ENCODE measurements at regions of chr10 and their contacts with region 1.

Region 1: GRCh38 chr10:13299437-13300287 is at the start of gene PHYH:
- DNase-seq: peak; percentile 94 to 98
- ATAC-seq: peak; percentile 88 to 93 (median 92)
- H3K4me3 ChIP-seq: peak within 1 kb of the TSS; percentile 87
- H3K27ac ChIP-seq: peak within 1 kb of the TSS; percentile 99
- H3K4me1 ChIP-seq: peaks cover 6% of the 10 kb centered on the region
- H3K27me3 ChIP-seq: no peaks in the 10 kb centered on the region
- CTCF ChIP-seq: no peak
- total RNA-seq, gene PHYH: 129 to 210 (median 183) TPM

Region 2: DNA sequence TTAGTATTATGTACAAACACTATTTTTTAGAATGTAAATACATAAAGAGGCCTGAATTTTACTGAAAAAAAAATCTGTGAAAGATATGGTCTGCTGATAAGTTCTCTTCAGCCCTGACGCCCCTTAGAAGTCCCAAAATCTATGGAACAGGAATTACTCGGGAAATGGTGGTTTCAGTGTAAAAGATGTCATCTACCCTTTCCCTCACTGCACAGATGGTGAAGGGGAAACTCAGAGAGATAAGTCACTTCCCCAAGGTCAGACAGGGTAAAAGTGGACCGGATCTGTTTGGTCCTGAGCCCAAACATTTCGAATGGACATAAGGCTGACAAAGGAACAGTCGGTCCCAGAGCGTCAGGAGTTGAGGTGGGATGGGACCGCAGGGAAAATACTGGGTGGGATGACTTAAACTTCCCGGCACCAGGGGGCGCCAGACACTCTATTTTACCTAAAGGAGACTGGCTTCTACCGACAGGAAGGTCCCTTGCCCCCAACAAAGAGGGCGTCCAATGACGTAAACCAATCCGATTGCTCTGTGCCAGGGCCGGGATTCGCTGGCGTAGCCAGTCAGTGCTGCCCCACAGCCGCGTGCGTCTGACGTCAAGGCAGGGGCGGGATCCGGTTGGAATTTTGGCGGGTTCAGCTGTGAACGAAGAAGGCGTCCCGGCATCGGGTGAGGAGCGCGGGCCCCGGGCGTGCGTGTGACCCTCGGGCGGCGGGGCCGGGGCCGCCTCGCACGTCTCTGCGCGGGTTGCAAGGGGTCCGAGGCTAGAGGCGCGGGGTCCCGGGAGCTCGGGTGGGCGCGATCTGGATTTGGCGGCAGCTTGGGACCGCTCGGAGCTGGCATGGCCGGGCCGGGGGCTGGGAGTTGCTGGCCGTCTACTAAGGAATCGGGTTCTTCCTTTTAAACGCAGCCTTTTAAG is 138.5 kb before region 1 on chr10 and contains the start of gene MCM10:
- intact Hi-C with region 1: loop called (anchors 2 kb)
- DNase-seq: peak; percentile 97 to 99
- ATAC-seq: peak; percentile 100
- H3K4me3 ChIP-seq: peak within 1 kb of the TSS; percentile 64
- H3K27ac ChIP-seq: no peak within 1 kb of the TSS
- H3K4me1 ChIP-seq: peaks cover 7% of the 10 kb centered on the region
- H3K27me3 ChIP-seq: no peaks in the 10 kb centered on the region
- CTCF ChIP-seq: peak; percentile 91
- total RNA-seq, gene MCM10: 0.10 to 0.83 (median 0.32) TPM in 3 of 4 donors, not detected in the other

Measured in psoas muscle (tissue), 8 donors.